Mucosa of descending colon (tissue), 3 donors: ENCODE measurements at regions of chr18 and their contacts with region 1.

Region 1: GRCh38 chr18:72391951-72392350 is 152.2 kb downstream of the CBLN2 start:
- DNase-seq: no peak
- ATAC-seq: no peak
- H3K4me3 ChIP-seq: no peak overlapping the region
- H3K4me1 ChIP-seq: no peaks in the 10 kb centered on the region
- CTCF ChIP-seq: no peak

Region 2: GRCh38 chr18:72201032-72201431 is 190.9 kb before region 1 on chr18:
- intact Hi-C with region 1: no loop called
- DNase-seq: no peak
- ATAC-seq: no peak
- H3K4me3 ChIP-seq: no peak overlapping the region
- H3K4me1 ChIP-seq: no peaks in the 10 kb centered on the region
- CTCF ChIP-seq: no peak

Region 3: GRCh38 chr18:72456802-72457201 is 64.9 kb after region 1 on chr18:
- intact Hi-C with region 1: loop called in 1 of 2 experiments (anchors 10 kb)
- DNase-seq: no peak
- ATAC-seq: no peak
- H3K4me3 ChIP-seq: no peak overlapping the region
- H3K4me1 ChIP-seq: no peaks in the 10 kb centered on the region
- CTCF ChIP-seq: no peak

Region 4: DNA sequence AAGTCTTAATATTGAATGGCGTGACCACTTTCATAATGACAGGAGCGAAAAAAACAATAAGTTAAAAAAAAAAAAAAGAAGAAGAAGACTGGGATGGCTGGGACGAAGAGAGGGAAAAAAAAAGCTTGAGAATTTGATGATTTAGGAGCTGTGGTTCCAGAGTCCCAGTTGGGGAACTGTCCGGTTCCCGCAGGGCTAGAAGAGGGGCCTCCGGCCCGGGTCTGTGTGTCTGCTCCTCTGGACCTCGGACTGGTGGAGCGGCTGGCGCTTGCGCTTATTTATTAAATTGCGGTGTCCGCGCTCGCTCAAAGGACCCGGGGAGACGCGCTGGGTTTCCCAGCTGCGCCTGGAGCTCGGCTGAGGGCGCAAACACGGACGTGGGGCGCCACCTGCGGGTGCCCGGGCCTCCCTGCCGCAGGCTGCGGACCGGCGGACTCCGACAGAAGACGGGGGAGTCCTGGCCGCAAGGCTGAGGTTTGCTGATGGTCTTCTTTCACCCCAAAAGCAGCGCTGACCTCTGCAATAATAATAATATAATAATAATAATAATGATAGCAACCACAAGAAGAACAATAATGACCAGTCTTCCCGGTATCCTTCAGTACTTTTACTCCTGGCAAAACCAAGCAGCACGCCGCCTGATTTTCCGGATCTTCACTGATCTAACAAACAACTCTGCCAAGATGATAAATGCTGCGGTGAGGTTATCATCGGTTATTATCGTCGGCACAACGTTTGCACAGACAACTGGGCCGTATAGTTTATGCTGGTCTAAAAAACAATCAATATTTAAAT is 152.3 kb after region 1 on chr18 and contains the start of gene CBLN2:
- intact Hi-C with region 1: no loop called
- DNase-seq: peak; percentile 36 to 51 (median 51)
- ATAC-seq: peak; percentile 67
- H3K4me3 ChIP-seq: no peak within 1 kb of the TSS
- H3K4me1 ChIP-seq: no peaks in the 10 kb centered on the region
- CTCF ChIP-seq: no peak
- total RNA-seq, gene CBLN2: 1.1 to 3.2 (median 1.3) TPM

Region 5: GRCh38 chr18:72555101-72555500 is 163.2 kb after region 1 on chr18:
- intact Hi-C with region 1: no loop called
- DNase-seq: no peak
- ATAC-seq: no peak
- H3K4me3 ChIP-seq: no peak overlapping the region
- H3K4me1 ChIP-seq: no peaks in the 10 kb centered on the region
- CTCF ChIP-seq: no peak